Left lung (tissue), 14 donors: ENCODE measurements at regions of chr5 and their contacts with region 1.

Region 1: GRCh38 chr5:138418444-138418843 is 20.4 kb upstream of the REEP2 start:
- DNase-seq: no peak
- ATAC-seq: no peak
- H3K4me3 ChIP-seq: no peak overlapping the region
- H3K27ac ChIP-seq: no peak overlapping the region
- H3K4me1 ChIP-seq: no peaks in the 10 kb centered on the region
- H3K27me3 ChIP-seq: no peaks in the 10 kb centered on the region
- CTCF ChIP-seq: no peak

Region 2: GRCh38 chr5:138180183-138180782 is 238.2 kb before region 1 on chr5:
- intact Hi-C with region 1: loop called in 1 of 2 experiments (anchors 10 kb)
- DNase-seq: peak in 2 of 4 donors; percentile 33 to 53
- ATAC-seq: peak; percentile 24
- H3K4me3 ChIP-seq: no peak overlapping the region
- H3K27ac ChIP-seq: no peak overlapping the region
- H3K4me1 ChIP-seq: peaks cover 15 to 32% of the 10 kb centered on the region in 2 donors
- H3K27me3 ChIP-seq: no peaks in the 10 kb centered on the region
- CTCF ChIP-seq: peak; percentile 11 to 16

Region 3: DNA sequence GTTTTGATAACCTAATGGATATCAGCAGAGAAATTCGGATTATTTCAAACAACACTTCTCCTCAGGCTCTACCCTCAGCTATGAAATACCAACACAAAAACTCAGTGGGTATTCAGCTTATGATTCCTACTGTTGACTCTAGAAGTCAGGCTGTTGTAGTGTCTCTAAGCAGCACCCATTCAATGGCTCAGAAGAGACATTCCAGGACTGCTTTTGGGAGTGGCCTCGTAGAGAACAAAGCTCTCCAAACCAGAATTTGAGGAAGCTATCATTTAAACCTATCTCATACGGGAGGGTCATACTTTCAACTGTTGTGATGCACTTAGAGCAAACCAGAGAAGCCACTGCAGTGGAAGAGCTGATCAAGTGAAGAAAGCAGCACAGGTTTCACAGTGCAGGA is 90.5 kb after region 1 on chr5:
- intact Hi-C with region 1: no loop called
- DNase-seq: no peak
- ATAC-seq: peak; percentile 80
- H3K4me3 ChIP-seq: no peak overlapping the region
- H3K27ac ChIP-seq: peak overlapping the region; percentile 33 to 35
- H3K4me1 ChIP-seq: peaks cover 3 to 18% of the 10 kb centered on the region in 2 donors
- H3K27me3 ChIP-seq: no peaks in the 10 kb centered on the region
- CTCF ChIP-seq: no peak